GM10248 (cell line): ENCODE measurements at regions of chr17 and their contacts with region 1.

Region 1: DNA sequence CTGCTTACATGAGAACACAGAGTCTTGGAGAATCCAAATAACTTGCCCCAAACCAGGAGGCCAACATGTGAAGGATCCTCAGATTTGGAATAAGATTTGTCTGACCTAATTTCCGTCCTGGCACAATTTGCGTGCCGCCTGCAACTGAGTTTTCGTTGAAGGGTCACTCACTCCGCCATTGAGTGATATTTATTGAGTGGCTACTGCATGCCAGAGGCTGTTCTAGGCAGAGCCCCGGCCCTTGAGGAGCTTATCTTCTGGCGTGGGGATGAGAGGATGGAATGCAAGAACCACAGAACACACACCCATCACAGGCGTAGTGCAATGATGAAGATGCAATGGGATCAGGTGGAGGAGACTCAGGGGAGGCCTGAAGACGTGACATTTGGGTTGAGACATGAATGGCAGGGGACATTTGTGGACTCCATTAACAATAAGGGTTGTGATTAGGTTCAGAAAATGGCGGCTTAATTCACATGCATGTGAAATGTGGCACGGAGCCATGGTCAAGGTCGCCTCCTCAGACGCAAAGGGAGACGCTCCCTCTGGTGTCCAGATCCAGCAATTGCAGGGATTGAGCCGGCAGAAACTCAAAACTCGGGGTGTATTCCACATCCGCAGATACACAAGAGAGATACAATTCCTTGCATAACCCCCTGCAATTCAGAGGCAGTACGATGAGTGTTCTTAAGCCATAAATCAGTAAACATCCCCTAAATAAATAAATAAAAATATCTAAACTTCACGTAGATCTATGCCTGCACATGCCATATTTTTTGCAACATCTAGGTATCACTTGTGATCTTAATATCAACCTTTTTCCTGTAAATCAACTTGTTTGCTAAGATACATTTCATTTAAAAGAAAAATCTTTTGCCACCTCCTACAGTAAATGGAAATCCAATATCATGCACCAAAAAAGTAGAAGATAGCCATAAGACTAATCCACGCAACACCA is 57.9 kb upstream of the CACNG4 start:
- DNase-seq: peak; percentile 76
- CTCF ChIP-seq: peak; percentile 78

Region 2: GRCh38 chr17:66755101-66755904 is 151.3 kb before region 1 on chr17:
- CTCF ChIA-PET with region 1: no interaction called
- POLR2A ChIA-PET with region 1: interaction called, 13 read pairs
- DNase-seq: no peak
- CTCF ChIP-seq: no peak